ENCODE measurements at regions of chr17 and their contacts with region 1.

Region 1: DNA sequence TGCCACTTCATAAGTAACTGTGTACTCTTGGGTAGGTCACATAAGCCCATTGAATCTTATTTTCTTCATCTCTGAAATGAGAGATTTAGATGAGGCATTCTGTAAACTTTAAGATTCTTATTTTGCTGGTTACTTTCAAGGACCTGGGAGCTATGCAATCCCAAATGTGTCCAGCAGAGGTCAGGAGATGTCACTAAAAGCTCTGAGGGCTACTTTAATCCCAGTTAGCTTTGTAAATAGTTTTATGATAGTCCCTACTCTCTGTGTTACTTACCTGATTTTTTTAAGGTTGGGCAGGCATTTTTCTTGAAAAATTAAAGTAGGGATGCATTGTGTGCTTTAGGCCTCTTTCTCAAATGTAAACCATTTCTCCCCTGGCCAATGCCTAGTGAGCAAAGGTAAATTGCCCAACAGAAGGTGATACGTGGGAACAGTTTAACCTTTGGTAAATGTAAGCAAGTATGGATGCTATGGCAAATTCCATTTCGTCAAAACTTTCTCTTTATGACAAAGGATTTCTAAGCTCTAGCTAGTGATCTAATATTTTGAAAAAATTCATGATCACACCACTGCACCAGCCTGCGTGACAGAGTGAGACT is 57.1 kb upstream of the WSB1 start:
- DNase-seq: peak; percentile 63
- ATAC-seq: peak; percentile 60; the same call in 2 of the 3 replicates
- H3K4me3 ChIP-seq: no peak overlapping the region
- H3K27ac ChIP-seq: no peak overlapping the region
- H3K4me1 ChIP-seq: peaks cover 19% of the 10 kb centered on the region
- H3K27me3 ChIP-seq: peaks cover 2 to 24% of the 10 kb centered on the region in 2 experiments; a peak in 3 of 5 replicates
- CTCF ChIP-seq: peak; percentile 74
- EP300 ChIP-seq: no peak
- POLR2A ChIP-seq: no peak
- RAD21 ChIP-seq: peak; percentile 66

Region 2: DNA sequence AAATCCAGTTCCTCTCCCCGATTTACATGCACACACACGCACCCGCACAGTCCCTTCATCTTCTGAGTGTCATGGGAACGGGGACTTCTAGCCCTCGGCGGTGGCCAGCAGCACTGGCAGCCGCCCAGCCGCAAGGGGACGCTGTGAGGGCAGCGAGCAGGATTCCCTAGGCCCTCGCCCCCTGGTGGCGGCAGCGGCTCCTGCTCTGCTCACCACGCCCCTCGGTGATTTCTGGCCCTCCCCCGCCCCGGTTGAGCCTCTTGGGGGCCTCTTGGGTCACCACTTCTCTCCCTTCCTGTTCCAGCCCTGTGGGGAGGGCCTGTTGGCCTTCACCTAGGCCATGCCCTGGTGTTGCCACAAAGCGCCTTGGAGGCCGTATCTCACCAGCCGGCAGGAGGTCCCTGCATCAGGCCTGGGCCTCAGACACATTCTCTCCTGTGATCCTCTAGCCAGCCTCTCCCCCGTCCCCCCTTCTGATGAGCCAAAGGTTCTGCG is 144.2 kb after region 1 on chr17:
- CTCF ChIA-PET with region 1: interaction called, 43 read pairs
- POLR2A ChIA-PET with region 1: no interaction called
- in situ Hi-C with region 1: no loop called
- intact Hi-C with region 1: no loop called
- DNase-seq: peak; percentile 75
- ATAC-seq: peak; percentile 96
- H3K4me3 ChIP-seq: peak overlapping the region in 1 of 3 experiments; percentile 51; a peak in 1 of 6 replicates
- H3K27ac ChIP-seq: no peak overlapping the region
- H3K4me1 ChIP-seq: peaks cover 28% of the 10 kb centered on the region
- H3K27me3 ChIP-seq: peaks cover 0 to 6% of the 10 kb centered on the region in 2 experiments; a peak in 2 of 5 replicates
- CTCF ChIP-seq: peak; percentile 99
- EP300 ChIP-seq: peak in 1 of 2 experiments; percentile 18; a peak in 1 of 4 replicates
- POLR2A ChIP-seq: no peak
- RAD21 ChIP-seq: peak; percentile 95

Measured in HepG2 (cell line).